ENCODE measurements at regions of chr11 and their contacts with region 1.

Region 1: GRCh38 chr11:96506041-96506440 is 116.2 kb downstream of the JRKL start:
- DNase-seq: no peak
- ATAC-seq: no peak
- H3K4me3 ChIP-seq: no peak overlapping the region
- H3K4me3 Mint-ChIP-seq: no peak overlapping the region
- H3K27ac ChIP-seq: no peak overlapping the region
- H3K27ac Mint-ChIP-seq: no peak overlapping the region
- H3K4me1 ChIP-seq: no peaks in the 10 kb centered on the region
- H3K4me1 Mint-ChIP-seq: no peaks in the 10 kb centered on the region
- H3K27me3 ChIP-seq: no peaks in the 10 kb centered on the region
- H3K27me3 Mint-ChIP-seq: peaks cover 3% of the 10 kb centered on the region
- CTCF ChIP-seq: no peak

Region 2: GRCh38 chr11:96472085-96472484 is 34.0 kb before region 1 on chr11:
- CTCF ChIA-PET with region 1: no interaction called
- POLR2A ChIA-PET with region 1: no interaction called
- intact Hi-C with region 1: loop called in 1 of 2 experiments (anchors 1 kb)
- DNase-seq: peak in 1 of 9 experiments; percentile 4
- ATAC-seq: no peak
- H3K4me3 ChIP-seq: no peak overlapping the region
- H3K4me3 Mint-ChIP-seq: no peak overlapping the region
- H3K27ac ChIP-seq: no peak overlapping the region
- H3K27ac Mint-ChIP-seq: no peak overlapping the region
- H3K4me1 ChIP-seq: no peaks in the 10 kb centered on the region
- H3K4me1 Mint-ChIP-seq: no peaks in the 10 kb centered on the region
- H3K27me3 ChIP-seq: peaks cover 0 to 3% of the 10 kb centered on the region in 2 experiments
- H3K27me3 Mint-ChIP-seq: peaks cover 7% of the 10 kb centered on the region
- CTCF ChIP-seq: no peak

Region 3: DNA sequence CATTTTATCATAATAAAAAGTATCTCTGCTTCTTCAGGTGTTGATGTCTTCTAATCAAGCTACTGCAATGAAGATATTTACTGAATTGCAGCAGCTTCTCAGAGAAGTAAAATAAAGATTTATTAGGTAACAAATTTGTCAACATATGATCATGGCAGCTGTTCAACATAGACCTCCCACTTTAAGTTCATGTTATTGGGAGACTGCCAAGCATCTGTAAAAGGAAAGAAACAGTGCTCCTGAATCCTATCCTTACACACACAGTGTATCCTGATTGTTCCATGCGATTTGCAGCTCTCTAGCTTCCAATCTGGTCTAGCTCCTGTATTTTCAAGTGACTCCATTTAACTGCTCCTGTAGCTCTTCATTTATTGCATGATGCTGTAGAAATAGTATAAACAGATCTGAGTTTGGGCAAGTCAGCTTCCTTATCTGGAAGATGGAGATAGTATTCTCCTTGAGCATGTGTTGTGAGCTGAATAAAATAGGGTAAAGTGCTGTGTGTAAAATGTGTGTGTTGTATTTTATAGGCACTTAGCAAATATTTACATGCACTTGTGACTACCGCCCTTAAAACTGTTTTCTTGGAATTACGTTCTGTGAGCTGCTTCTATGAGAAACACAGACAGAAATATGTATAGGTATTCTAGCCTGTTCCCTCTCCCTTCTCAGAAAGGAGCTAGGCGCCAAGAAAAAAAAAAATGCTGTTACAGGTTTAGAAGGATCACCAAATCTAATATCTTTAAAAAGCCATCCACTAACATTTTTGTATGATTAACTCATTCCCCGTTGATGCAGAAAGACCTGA is 174.4 kb after region 1 on chr11:
- CTCF ChIA-PET with region 1: no interaction called
- POLR2A ChIA-PET with region 1: no interaction called
- intact Hi-C with region 1: no loop called
- DNase-seq: no peak
- ATAC-seq: no peak
- H3K4me3 ChIP-seq: no peak overlapping the region
- H3K4me3 Mint-ChIP-seq: no peak overlapping the region
- H3K27ac ChIP-seq: no peak overlapping the region
- H3K27ac Mint-ChIP-seq: no peak overlapping the region
- H3K4me1 ChIP-seq: no peaks in the 10 kb centered on the region
- H3K4me1 Mint-ChIP-seq: no peaks in the 10 kb centered on the region
- H3K27me3 ChIP-seq: no peaks in the 10 kb centered on the region
- H3K27me3 Mint-ChIP-seq: no peaks in the 10 kb centered on the region
- CTCF ChIP-seq: no peak

Measured in CD8-positive, alpha-beta T cell (primary cell).